ENCODE measurements at regions of chr20 and their contacts with region 1.

Region 1: DNA sequence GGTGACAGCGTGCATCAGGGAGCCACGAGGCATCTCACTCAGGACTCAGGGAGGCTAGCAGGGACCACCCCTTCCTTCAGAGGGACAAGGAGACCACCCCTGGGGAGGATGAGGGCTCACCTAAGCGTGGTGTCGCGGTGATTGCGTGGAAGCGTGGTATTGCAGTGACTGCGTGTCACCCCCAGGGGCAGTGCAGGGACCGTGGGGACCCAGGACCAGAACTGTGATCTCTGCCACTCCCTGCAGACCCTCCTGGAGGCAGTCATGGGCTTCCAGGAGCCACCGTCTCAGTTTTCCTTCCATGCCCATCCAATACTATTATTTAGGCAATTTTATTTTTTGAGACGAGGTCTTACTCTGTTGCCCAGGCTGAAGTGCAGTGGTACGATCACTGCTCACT is 147.1 kb downstream of the TAF4 start:
- DNase-seq: no peak
- ATAC-seq: peak; percentile 54
- H3K4me3 ChIP-seq: no peak overlapping the region
- H3K27ac ChIP-seq: no peak overlapping the region
- H3K4me1 ChIP-seq: no peaks in the 10 kb centered on the region
- H3K27me3 ChIP-seq: peaks cover 26 to 59% of the 10 kb centered on the region in 2 experiments; a peak in 4 of 5 replicates
- CTCF ChIP-seq: peak; percentile 54
- EP300 ChIP-seq: no peak
- POLR2A ChIP-seq: no peak
- RAD21 ChIP-seq: no peak

Region 2: GRCh38 chr20:61965606-61966491 is 47.3 kb after region 1 on chr20:
- CTCF ChIA-PET with region 1: no interaction called
- POLR2A ChIA-PET with region 1: no interaction called
- in situ Hi-C with region 1: loop called (anchors 5 kb)
- intact Hi-C with region 1: no loop called
- DNase-seq: peak; percentile 55
- ATAC-seq: peak; percentile 46
- H3K4me3 ChIP-seq: peak overlapping the region in 1 of 3 experiments; percentile 57; a peak in 1 of 6 replicates
- H3K27ac ChIP-seq: no peak overlapping the region
- H3K4me1 ChIP-seq: peaks cover 31% of the 10 kb centered on the region
- H3K27me3 ChIP-seq: no peaks in the 10 kb centered on the region; a peak in 1 of 5 replicates
- CTCF ChIP-seq: peak; percentile 56
- EP300 ChIP-seq: no peak
- POLR2A ChIP-seq: no peak
- RAD21 ChIP-seq: no peak